ENCODE measurements at regions of chr6 and their contacts with region 1.

Region 1: DNA sequence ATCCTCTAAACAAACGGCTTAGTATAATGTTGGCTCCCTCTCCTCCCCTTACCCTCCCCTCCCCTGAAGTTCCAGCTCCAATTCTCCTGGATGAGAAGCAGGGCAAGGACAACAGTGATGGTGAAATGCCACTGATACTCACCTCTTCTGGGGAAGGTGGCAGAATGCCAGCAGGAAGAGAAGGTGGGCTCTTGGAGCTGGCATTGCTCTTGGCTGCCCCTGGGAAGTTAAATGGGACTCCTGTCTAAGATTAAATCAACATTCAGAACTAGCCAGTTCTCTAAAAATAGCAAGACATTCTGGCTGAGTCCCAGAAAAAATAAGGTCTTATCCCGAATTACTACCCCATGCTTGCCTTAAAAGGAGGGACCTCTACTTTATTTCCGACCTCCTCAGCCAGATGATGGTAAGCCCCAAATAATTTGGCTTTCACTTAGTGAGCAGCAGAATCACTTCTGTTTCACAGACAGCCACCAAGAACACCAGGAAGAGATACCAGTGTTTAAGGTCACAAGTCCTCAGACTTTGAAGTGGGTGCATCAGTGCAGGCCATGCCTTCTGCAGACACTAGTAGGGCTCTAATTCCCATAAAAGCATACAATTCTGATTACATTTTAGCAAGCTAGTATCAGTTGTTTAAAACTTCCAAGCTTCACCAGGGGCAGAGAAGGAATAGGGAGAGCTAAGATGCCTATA is 46.0 kb upstream of the IL17A start:
- DNase-seq: peak in 1 of 2 donors; percentile 23
- ATAC-seq: peak in 1 of 2 donors; percentile 27
- H3K4me3 ChIP-seq: peak overlapping the region in 2 of 4 donors; percentile 27 to 60
- H3K27ac ChIP-seq: peak overlapping the region; percentile 74 to 83 (median 78)
- H3K4me1 ChIP-seq: peaks cover 40 to 58% of the 10 kb centered on the region in 2 donors
- H3K27me3 ChIP-seq: no peaks in the 10 kb centered on the region
- CTCF ChIP-seq: no peak
- POLR2A ChIP-seq: no peak

Region 2: GRCh38 chr6:52108128-52108527 is 32.0 kb before region 1 on chr6:
- in situ Hi-C with region 1: no loop called
- intact Hi-C with region 1: loop called (anchors 2 kb)
- DNase-seq: peak; percentile 83 to 87
- ATAC-seq: peak; percentile 75 to 77
- H3K4me3 ChIP-seq: no peak overlapping the region
- H3K27ac ChIP-seq: peak overlapping the region; percentile 82 to 96 (median 84)
- H3K4me1 ChIP-seq: peaks cover 26 to 51% of the 10 kb centered on the region in 2 donors
- H3K27me3 ChIP-seq: no peaks in the 10 kb centered on the region
- CTCF ChIP-seq: no peak
- POLR2A ChIP-seq: no peak

Measured in gastrocnemius medialis (tissue), 4 donors.